ENCODE measurements at regions of chr17 and their contacts with region 1.

Region 1: GRCh38 chr17:49290690-49291359 is 60.2 kb upstream of the PHOSPHO1 start:
- DNase-seq: peak; percentile 65
- H3K4me3 ChIP-seq: no peak overlapping the region
- H3K27ac ChIP-seq: no peak overlapping the region
- H3K4me1 ChIP-seq: no peaks in the 10 kb centered on the region
- H3K27me3 ChIP-seq: no peaks in the 10 kb centered on the region
- CTCF ChIP-seq: peak; percentile 55 to 63
- POLR2A ChIP-seq: no peak

Region 2: GRCh38 chr17:49201481-49201927 is 89.3 kb before region 1 on chr17:
- CTCF ChIA-PET with region 1: interaction called, 10 read pairs
- POLR2A ChIA-PET with region 1: no interaction called
- dilution Hi-C with region 1: no loop called
- intact Hi-C with region 1: no loop called
- DNase-seq: peak; percentile 69
- H3K4me3 ChIP-seq: no peak overlapping the region
- H3K27ac ChIP-seq: peak overlapping the region; percentile 58
- H3K4me1 ChIP-seq: peaks cover 20% of the 10 kb centered on the region
- H3K27me3 ChIP-seq: no peaks in the 10 kb centered on the region
- CTCF ChIP-seq: no peak
- POLR2A ChIP-seq: peak; percentile 59

Region 3: GRCh38 chr17:49230636-49231562 is 59.9 kb before region 1 on chr17 and contains the start of gene PHOSPHO1:
- CTCF ChIA-PET with region 1: interaction called, 140 read pairs
- POLR2A ChIA-PET with region 1: no interaction called
- dilution Hi-C with region 1: no loop called
- intact Hi-C with region 1: loop called (anchors 2 kb)
- DNase-seq: peak; percentile 85
- H3K4me3 ChIP-seq: peak within 1 kb of the TSS; percentile 42 to 60 (median 49)
- H3K27ac ChIP-seq: no peak within 1 kb of the TSS
- H3K4me1 ChIP-seq: peaks cover 10% of the 10 kb centered on the region
- H3K27me3 ChIP-seq: peaks cover 0 to 4% of the 10 kb centered on the region in 2 experiments
- CTCF ChIP-seq: no peak
- POLR2A ChIP-seq: no peak
- total RNA-seq, gene PHOSPHO1: 0.18 TPM in 1 of 2 replicates, not detected in the other

Region 4: GRCh38 chr17:49260011-49260921 is 30.6 kb before region 1 on chr17:
- CTCF ChIA-PET with region 1: interaction called, 12 read pairs
- POLR2A ChIA-PET with region 1: no interaction called
- dilution Hi-C with region 1: no loop called
- intact Hi-C with region 1: no loop called
- DNase-seq: peak; percentile 87
- H3K4me3 ChIP-seq: peak overlapping the region; percentile 43 to 51 (median 51)
- H3K27ac ChIP-seq: peak overlapping the region; percentile 85
- H3K4me1 ChIP-seq: peaks cover 14% of the 10 kb centered on the region
- H3K27me3 ChIP-seq: no peaks in the 10 kb centered on the region
- CTCF ChIP-seq: no peak
- POLR2A ChIP-seq: peak; percentile 76

Region 5: GRCh38 chr17:49358641-49359247 is 67.9 kb after region 1 on chr17:
- CTCF ChIA-PET with region 1: no interaction called
- POLR2A ChIA-PET with region 1: no interaction called
- dilution Hi-C with region 1: no loop called
- intact Hi-C with region 1: no loop called
- DNase-seq: no peak
- H3K4me3 ChIP-seq: no peak overlapping the region
- H3K27ac ChIP-seq: no peak overlapping the region
- H3K4me1 ChIP-seq: peaks cover 19% of the 10 kb centered on the region
- H3K27me3 ChIP-seq: no peaks in the 10 kb centered on the region
- CTCF ChIP-seq: no peak
- POLR2A ChIP-seq: no peak

Region 6: DNA sequence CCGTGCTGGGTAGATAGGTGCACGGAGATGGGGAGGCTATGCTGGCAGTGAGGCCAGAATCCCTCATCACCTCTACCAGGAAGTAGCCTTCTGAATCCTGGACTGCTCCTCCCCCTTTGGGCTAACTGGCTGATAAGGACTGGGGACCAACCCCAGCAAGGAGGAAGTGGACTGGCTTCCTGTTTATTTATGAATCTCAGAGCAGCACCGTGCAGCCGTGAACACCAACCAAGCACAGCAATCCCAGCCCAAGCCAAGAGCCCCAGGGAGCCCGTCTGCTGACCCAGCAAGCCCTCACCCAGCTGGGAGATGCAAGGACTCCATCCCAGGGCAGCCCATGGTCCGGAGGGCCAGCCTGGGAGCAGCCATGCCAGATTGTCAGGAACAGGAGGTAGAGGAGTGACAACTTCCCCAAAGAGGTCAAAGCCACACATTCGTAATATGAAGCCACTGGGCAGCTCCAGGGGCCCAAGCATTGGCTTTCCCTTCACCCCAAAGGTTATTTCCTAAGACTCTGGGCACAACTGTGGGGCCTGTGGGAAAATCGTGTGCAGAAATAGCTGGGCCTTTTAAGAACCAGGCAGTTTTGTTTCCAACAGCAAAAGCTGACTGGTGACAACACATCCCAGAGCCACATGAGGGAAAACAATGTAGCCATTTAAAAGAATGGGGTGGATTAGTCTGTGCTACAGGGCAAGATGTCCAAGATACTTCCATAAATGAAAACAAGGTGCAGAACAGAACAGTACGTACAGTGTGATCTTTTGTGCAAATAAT is 99.9 kb after region 1 on chr17:
- CTCF ChIA-PET with region 1: interaction called, 14 read pairs
- POLR2A ChIA-PET with region 1: no interaction called
- dilution Hi-C with region 1: no loop called
- intact Hi-C with region 1: no loop called
- DNase-seq: peak; percentile 29
- H3K4me3 ChIP-seq: no peak overlapping the region
- H3K27ac ChIP-seq: peak overlapping the region; percentile 33
- H3K4me1 ChIP-seq: peaks cover 19% of the 10 kb centered on the region
- H3K27me3 ChIP-seq: no peaks in the 10 kb centered on the region
- CTCF ChIP-seq: no peak
- POLR2A ChIP-seq: no peak